ENCODE measurements at regions of chr5 and their contacts with region 1.

Region 1: DNA sequence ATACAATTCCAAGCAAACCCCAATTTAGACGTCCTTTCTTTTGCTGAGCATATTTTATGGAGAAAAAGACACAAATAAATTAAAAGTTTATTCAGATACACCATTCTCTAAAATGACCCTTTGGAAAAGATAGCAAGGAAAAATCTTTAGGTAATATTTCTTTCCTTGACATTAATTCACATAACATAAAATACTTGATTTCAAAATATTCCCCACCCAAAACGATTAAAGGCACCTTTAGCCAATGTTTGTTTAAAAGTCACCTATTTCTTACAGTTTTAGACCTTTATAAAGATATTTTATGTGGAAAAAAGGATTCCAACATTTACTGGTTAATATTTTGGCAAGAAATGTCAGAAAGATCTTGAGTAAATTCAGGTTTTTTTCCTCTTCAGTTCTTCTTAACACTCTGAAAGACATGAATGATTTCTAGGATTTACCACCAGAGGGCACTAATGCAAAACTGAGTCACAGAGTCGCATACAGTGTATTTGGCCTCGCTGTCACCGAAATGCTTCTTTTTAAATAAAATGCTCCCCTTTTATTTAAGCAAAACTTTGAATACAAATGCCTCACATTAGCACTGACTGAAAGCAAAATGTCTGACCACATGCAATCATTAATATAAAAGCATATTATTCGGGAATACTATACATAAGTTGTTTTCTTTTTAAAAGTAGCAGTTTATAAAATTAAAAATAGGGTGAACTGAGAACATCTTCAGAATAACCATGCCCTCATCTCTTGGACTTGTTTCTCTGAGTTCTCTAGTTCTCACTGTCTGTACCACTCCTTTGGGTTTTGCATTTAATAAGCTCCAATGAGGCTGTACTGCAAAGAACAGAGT is 122.5 kb downstream of the SLC1A3 start:
- DNase-seq: peak; percentile 56
- H3K4me3 ChIP-seq: no peak overlapping the region
- H3K27ac ChIP-seq: no peak overlapping the region
- H3K4me1 ChIP-seq: no peaks in the 10 kb centered on the region; a peak in 1 of 4 replicates
- H3K27me3 ChIP-seq: peaks cover 13% of the 10 kb centered on the region; the same call in 1 of the 2 replicates
- CTCF ChIP-seq: peak; percentile 81
- EP300 ChIP-seq: no peak
- RAD21 ChIP-seq: peak; percentile 62

Region 2: DNA sequence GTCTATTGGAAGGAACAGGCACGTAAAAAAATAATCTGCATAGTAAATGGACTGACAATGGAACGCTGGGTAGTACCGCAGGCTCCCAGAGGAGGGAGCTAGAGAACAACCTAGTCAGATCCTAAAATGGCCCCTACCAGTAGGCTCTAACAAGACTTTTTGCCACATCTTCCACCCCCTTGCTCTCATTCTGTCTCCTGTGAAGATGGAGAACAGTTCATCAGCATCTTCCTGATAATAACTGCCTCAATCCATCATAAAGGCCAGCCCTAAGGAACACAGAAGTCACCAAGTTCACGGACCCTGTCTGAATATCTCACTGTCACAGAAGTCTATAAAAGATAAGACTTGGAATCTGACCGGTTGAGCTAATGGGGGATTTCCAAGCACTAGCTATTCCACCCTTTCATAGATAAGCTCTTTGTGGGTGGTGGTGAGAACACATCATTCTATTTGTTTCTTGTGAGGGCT is 10.9 kb after region 1 on chr5:
- CTCF ChIA-PET with region 1: interaction called, 18 read pairs
- POLR2A ChIA-PET with region 1: no interaction called
- DNase-seq: peak; percentile 57
- H3K4me3 ChIP-seq: no peak overlapping the region; a peak in 1 of 4 replicates
- H3K27ac ChIP-seq: no peak overlapping the region
- H3K4me1 ChIP-seq: peaks cover 0 to 9% of the 10 kb centered on the region in 2 experiments; a peak in 2 of 4 replicates
- H3K27me3 ChIP-seq: peaks cover 22% of the 10 kb centered on the region; the same call in 1 of the 2 replicates
- CTCF ChIP-seq: peak; percentile 74
- EP300 ChIP-seq: no peak
- RAD21 ChIP-seq: peak; percentile 58

Region 3: GRCh38 chr5:36870399-36871040 is 141.6 kb after region 1 on chr5:
- CTCF ChIA-PET with region 1: interaction called, 12 read pairs
- POLR2A ChIA-PET with region 1: no interaction called
- DNase-seq: peak; percentile 70
- H3K4me3 ChIP-seq: peak overlapping the region in 1 of 2 experiments; percentile 12; a peak in 1 of 4 replicates
- H3K27ac ChIP-seq: no peak overlapping the region
- H3K4me1 ChIP-seq: peaks cover 6 to 15% of the 10 kb centered on the region in 2 experiments; a peak in 2 of 4 replicates
- H3K27me3 ChIP-seq: no peaks in the 10 kb centered on the region
- CTCF ChIP-seq: peak; percentile 77
- EP300 ChIP-seq: no peak
- RAD21 ChIP-seq: peak; percentile 60

Measured in SK-N-SH (cell line).